Right ventricle myocardium superior (tissue), 1 donor: ENCODE measurements at regions of chr2 and their contacts with region 1.

Region 1: DNA sequence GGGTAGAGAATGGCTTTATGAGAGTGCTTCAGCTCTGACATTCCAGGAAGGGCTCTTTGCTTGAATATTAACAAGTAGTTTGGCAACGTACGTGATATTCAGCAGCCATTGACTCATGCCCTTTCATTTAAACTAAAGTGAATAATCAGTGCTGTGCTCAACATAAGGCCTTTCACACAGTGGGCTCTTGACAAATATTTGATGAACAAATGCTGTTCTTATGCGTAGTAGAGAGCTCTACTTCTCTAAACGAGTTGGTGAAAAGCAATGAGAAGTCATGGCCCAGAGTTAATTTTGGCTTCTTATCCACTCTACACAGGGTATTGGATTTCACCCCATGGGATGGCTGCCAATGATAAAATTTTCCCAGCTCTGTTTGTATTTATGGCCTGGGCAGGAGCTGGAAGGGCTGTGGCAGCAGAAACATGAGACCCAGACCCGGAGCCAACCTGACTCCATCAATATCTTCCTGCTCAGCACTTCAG is 338.9 kb downstream of the CCDC85A start:
- DNase-seq: peak; percentile 40
- ATAC-seq: peak; percentile 96

Region 2: DNA sequence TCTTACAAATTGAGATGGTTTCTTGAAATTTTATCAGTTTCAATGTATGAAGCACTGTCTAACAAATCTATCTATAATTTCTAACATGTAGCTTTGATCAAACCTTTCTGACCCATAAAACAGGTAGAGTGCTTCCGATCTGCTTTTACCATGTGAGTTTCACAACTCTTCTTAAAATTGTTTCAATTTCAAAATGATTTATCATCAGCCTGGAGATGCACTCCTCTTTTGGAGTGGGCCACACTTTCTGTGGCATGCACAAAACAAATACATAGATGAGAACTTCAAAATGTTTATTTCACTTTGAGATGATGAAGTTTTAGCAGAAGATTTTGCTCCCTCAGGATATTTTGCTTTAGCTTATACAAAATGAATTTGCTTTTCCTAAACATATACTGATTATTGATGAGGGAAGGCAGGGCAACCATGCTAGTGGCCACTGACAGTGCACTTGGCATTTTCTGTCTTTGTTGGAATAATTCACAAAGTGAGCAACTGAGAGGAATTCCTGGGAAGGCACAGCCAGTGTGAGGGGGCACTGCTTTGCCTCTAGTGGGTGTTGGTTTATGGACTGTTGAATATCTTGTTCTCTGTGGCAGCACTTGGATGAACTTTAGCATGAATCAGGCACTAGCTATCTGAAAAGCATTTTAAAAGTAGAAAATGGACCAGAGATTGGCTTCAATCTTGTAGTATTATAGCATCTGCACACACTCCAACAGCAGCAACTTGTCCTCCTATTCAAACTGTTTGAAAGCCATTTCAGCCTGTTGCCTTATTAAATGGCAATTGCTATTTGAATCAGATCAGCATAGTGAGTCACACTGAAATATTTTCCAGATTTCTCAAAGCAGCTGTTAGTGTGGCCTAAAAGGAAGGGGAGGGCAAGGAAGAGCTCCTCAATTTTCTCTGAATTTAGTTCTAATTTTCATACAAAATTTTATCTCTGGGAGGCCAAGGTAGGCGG is 145.7 kb before region 1 on chr2:
- intact Hi-C with region 1: no loop called
- DNase-seq: no peak
- ATAC-seq: no peak

Region 3: GRCh38 chr2:56474412-56475158 is 48.1 kb before region 1 on chr2:
- intact Hi-C with region 1: loop called (anchors 2 kb)
- DNase-seq: no peak
- ATAC-seq: peak; percentile 95